ENCODE measurements at regions of chr12 and their contacts with region 1.

Region 1: GRCh38 chr12:26748741-26749431 is 84.1 kb downstream of the ITPR2 start:
- DNase-seq: no peak
- H3K4me3 Mint-ChIP-seq: peak overlapping the region; percentile 51
- H3K27ac Mint-ChIP-seq: peak overlapping the region; percentile 75
- H3K4me1 Mint-ChIP-seq: peaks cover 50% of the 10 kb centered on the region
- H3K27me3 Mint-ChIP-seq: no peaks in the 10 kb centered on the region

Region 2: DNA sequence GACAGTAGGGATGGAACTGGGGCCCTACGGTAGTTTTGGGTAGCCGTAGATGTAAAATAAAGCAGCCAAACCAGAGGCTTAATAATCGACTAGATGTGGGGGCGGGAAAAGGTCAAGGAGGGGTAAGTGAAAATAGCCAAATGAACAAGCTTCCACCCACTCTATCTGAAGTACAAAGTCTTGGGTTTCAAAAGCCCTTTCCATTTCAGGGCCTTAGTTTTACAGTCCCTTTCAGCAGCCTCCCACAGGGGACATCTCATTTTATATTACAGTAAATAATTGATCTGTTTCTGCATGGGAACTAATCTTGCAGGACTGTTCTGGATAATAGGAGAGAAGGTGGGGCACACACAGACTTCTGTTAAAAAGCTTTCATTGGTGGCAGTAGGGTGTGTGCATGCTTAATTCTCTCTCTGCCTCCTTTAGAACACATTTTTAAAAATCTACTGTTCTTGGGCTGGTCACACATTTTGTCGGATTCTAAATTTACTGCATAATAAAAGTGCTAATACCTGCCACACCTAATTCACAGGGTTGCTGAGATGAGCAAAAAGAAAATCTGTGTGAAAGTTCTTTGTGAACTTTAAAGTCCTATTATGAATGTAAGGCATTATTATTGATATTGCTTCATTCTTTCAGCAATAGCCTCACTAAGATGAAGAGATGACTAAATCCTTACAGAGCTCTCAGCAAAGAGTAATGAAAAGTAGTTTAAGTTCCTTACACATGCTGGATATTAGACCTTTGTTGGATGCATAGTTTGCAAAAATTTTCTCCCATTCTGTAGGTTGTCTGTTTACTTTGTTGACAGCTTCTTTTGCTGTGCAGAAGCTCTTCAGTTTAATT is 20.5 kb before region 1 on chr12:
- intact Hi-C with region 1: loop called (anchors 1 kb)
- DNase-seq: no peak
- H3K4me3 Mint-ChIP-seq: no peak overlapping the region
- H3K27ac Mint-ChIP-seq: no peak overlapping the region
- H3K4me1 Mint-ChIP-seq: peaks cover 43% of the 10 kb centered on the region
- H3K27me3 Mint-ChIP-seq: no peaks in the 10 kb centered on the region

Region 3: GRCh38 chr12:26808766-26809476 is 60.0 kb after region 1 on chr12:
- intact Hi-C with region 1: loop called (anchors 2 kb)
- DNase-seq: no peak
- H3K4me3 Mint-ChIP-seq: no peak overlapping the region
- H3K27ac Mint-ChIP-seq: peak overlapping the region; percentile 52
- H3K4me1 Mint-ChIP-seq: peaks cover 28% of the 10 kb centered on the region
- H3K27me3 Mint-ChIP-seq: no peaks in the 10 kb centered on the region

Region 4: GRCh38 chr12:26884765-26885576 is 136.1 kb after region 1 on chr12:
- intact Hi-C with region 1: loop called (anchors 1 kb)
- DNase-seq: peak; percentile 96
- H3K4me3 Mint-ChIP-seq: peak overlapping the region; percentile 61
- H3K27ac Mint-ChIP-seq: no peak overlapping the region
- H3K4me1 Mint-ChIP-seq: peaks cover 13% of the 10 kb centered on the region
- H3K27me3 Mint-ChIP-seq: peaks cover 19% of the 10 kb centered on the region

Measured in activated CD4-positive, alpha-beta T cell treated with anti-CD3 and anti-CD28 coated beads, Interleukin-2, amount 10 ng/mL, durations not matched to agents 24 days and 14 days (primary cell).